SK-N-SH (cell line): ENCODE measurements at regions of chr11 and their contacts with region 1.

Region 1: GRCh38 chr11:72430741-72431570 is 3.4 kb downstream of the CLPB start:
- DNase-seq: peak; percentile 74
- H3K4me3 ChIP-seq: peak overlapping the region in 1 of 2 experiments; percentile 36; a peak in 1 of 4 replicates
- H3K27ac ChIP-seq: peak overlapping the region in 1 of 2 experiments; percentile 67; a peak in 2 of 4 replicates
- H3K4me1 ChIP-seq: peaks cover 9 to 44% of the 10 kb centered on the region in 2 experiments; a peak in 2 of 4 replicates
- H3K27me3 ChIP-seq: no peaks in the 10 kb centered on the region
- CTCF ChIP-seq: peak; percentile 91
- EP300 ChIP-seq: no peak
- RAD21 ChIP-seq: peak; percentile 98

Region 2: GRCh38 chr11:72024069-72024754 is 406.7 kb before region 1 on chr11:
- CTCF ChIA-PET with region 1: interaction called, 17 read pairs
- POLR2A ChIA-PET with region 1: no interaction called
- DNase-seq: no peak
- H3K4me3 ChIP-seq: no peak overlapping the region
- H3K27ac ChIP-seq: peak overlapping the region in 1 of 2 experiments; percentile 53; a peak in 2 of 4 replicates
- H3K4me1 ChIP-seq: peaks cover 11 to 16% of the 10 kb centered on the region in 2 experiments; a peak in 3 of 4 replicates
- H3K27me3 ChIP-seq: no peaks in the 10 kb centered on the region
- CTCF ChIP-seq: no peak
- EP300 ChIP-seq: peak in 1 of 2 experiments; percentile 77; a peak in 1 of 4 replicates
- RAD21 ChIP-seq: no peak

Region 3: GRCh38 chr11:72112321-72113219 is 318.4 kb before region 1 on chr11 and contains the start of gene ANAPC15:
- CTCF ChIA-PET with region 1: interaction called, 16 read pairs
- POLR2A ChIA-PET with region 1: no interaction called
- DNase-seq: peak; percentile 84
- H3K4me3 ChIP-seq: peak within 1 kb of the TSS; percentile 71 to 77
- H3K27ac ChIP-seq: peak within 1 kb of the TSS; percentile 96 to 99
- H3K4me1 ChIP-seq: peaks cover 6 to 16% of the 10 kb centered on the region in 2 experiments; a peak in 3 of 4 replicates
- H3K27me3 ChIP-seq: no peaks in the 10 kb centered on the region
- CTCF ChIP-seq: no peak
- EP300 ChIP-seq: peak in 1 of 2 experiments; percentile 23; a peak in 1 of 4 replicates
- RAD21 ChIP-seq: no peak; the same call in 1 of the 2 replicates
- polyA plus RNA-seq, gene ANAPC15: 85.6 and 92.3 TPM in 2 replicates

Region 4: DNA sequence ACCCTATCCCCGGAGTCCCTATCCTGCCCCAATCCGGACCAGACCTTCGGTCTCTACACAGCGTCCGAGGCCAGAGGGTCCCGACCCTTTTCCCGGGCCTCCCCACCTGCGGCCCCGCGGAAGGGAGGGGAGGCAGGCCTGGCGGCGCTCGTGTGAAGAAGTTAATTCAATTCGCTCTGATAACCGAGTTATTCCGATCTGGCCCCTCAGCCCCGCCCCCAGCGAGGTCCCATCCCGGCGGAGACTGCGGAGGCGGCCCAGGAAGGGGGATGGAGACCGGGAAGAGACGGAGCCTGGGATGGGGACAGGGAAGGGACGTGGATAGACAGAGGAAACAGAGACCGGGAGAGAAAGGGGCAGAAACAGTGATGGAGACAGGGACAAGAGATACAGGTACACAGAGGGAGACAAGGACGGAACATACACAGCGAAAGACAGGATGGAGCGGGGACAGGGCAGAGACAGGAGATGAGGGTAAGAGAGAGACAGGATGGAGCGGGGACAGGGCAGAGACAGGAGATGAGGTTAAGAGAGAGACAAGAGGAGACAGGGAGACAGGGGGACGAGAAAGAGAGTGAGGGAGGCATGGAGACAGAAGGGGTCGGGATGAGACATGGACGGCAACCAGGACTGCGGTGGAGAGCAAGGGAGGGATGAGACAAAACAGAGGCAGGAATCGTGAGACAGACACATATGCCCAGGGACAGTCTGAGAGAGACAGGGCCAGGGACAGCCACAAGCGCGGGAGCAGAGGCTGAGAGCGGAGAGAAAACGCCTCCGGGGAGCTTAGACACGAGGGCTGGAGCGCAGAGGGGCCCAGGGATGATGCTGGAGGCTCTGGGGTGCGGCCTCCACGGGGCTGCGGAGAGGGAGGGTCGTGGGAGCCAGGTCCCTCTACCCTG is 186.3 kb before region 1 on chr11:
- CTCF ChIA-PET with region 1: interaction called, 215 read pairs
- POLR2A ChIA-PET with region 1: interaction called, 136 read pairs
- DNase-seq: peak; percentile 92
- H3K4me3 ChIP-seq: peak overlapping the region; percentile 14 to 83; a peak in 2 of 4 replicates
- H3K27ac ChIP-seq: peak overlapping the region in 1 of 2 experiments; percentile 79; a peak in 2 of 4 replicates
- H3K4me1 ChIP-seq: peaks cover 4 to 10% of the 10 kb centered on the region in 2 experiments; a peak in 1 of 4 replicates
- H3K27me3 ChIP-seq: no peaks in the 10 kb centered on the region; the same call in 1 of the 2 replicates
- CTCF ChIP-seq: no peak
- EP300 ChIP-seq: peak in 1 of 2 experiments; percentile 59; a peak in 2 of 4 replicates
- RAD21 ChIP-seq: peak; percentile 41

Region 5: DNA sequence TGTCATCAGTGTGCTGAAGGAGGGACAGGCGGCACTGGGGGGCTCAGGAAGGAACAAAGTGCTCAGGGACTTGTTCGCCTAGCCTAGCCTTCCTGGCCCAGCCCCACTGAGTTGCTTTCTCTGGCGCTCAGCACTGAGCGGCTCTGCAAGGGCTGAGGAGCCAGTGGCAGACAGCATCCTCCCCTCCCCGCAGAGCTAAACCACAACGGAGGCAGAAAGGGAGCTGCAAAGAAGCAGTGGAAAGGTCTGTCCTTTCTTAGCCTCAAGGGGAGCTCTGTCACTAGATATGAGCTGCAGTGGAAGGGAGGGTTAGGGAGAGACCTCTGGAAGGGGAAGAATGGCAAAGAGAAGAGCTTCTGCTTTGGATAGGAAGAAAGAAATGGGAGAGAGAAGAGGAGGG is 97.3 kb before region 1 on chr11:
- CTCF ChIA-PET with region 1: interaction called, 15 read pairs
- POLR2A ChIA-PET with region 1: interaction called, 7 read pairs
- DNase-seq: peak; percentile 61
- H3K4me3 ChIP-seq: no peak overlapping the region
- H3K27ac ChIP-seq: peak overlapping the region; percentile 35 to 99; a peak in 3 of 4 replicates
- H3K4me1 ChIP-seq: peaks cover 32 to 75% of the 10 kb centered on the region in 2 experiments
- H3K27me3 ChIP-seq: no peaks in the 10 kb centered on the region
- CTCF ChIP-seq: peak; percentile 52
- EP300 ChIP-seq: peak in 1 of 2 experiments; percentile 59; a peak in 1 of 4 replicates
- RAD21 ChIP-seq: peak; percentile 73

Region 6: DNA sequence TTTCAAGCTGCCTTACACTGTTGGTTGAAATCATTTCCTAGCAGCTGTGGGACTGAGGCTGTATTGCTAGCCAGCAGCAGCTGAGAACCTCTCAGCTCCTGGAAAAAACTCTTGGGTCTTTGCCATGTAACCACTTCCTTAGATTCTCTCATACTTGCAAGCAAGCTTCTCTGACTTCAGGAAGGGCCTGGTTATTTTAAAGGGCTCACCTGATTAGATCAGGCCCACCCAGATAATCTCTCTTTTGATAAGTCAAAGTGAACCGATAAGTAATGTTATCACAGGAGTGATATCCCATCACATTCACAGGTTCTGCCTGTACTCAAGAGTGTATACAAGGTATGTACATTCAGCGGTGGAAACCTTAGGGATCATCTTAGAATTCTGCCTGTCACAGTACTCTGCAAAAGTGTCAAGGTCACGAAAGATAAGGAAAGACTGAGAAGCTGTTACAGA is 10.8 kb after region 1 on chr11:
- CTCF ChIA-PET with region 1: interaction called, 86 read pairs
- POLR2A ChIA-PET with region 1: no interaction called
- DNase-seq: no peak
- H3K4me3 ChIP-seq: no peak overlapping the region
- H3K27ac ChIP-seq: no peak overlapping the region
- H3K4me1 ChIP-seq: peaks cover 0 to 6% of the 10 kb centered on the region in 2 experiments; a peak in 1 of 4 replicates
- H3K27me3 ChIP-seq: no peaks in the 10 kb centered on the region; the same call in 1 of the 2 replicates
- CTCF ChIP-seq: no peak
- EP300 ChIP-seq: no peak
- RAD21 ChIP-seq: no peak